Activated CD4-positive, alpha-beta memory T cell treated with anti-CD3 and anti-CD28 coated beads, Interleukin-2, amount 10 ng/mL, durations not matched to agents 7 days and 5 days (primary cell): ENCODE measurements at regions of chr4 and their contacts with region 1.

Region 1: GRCh38 chr4:37603070-37603468 is 83.1 kb downstream of the RELL1 start:
- DNase-seq: peak; percentile 78
- H3K4me3 Mint-ChIP-seq: no peak overlapping the region
- H3K27ac Mint-ChIP-seq: no peak overlapping the region
- H3K4me1 Mint-ChIP-seq: peaks cover 54% of the 10 kb centered on the region
- H3K27me3 Mint-ChIP-seq: no peaks in the 10 kb centered on the region

Region 2: GRCh38 chr4:37586161-37586560 is 16.9 kb before region 1 on chr4:
- CTCF ChIA-PET with region 1: no interaction called
- POLR2A ChIA-PET with region 1: no interaction called
- DNase-seq: no peak
- H3K4me3 Mint-ChIP-seq: no peak overlapping the region
- H3K27ac Mint-ChIP-seq: no peak overlapping the region
- H3K4me1 Mint-ChIP-seq: peaks cover 9% of the 10 kb centered on the region
- H3K27me3 Mint-ChIP-seq: peaks cover 12% of the 10 kb centered on the region

Region 3: DNA sequence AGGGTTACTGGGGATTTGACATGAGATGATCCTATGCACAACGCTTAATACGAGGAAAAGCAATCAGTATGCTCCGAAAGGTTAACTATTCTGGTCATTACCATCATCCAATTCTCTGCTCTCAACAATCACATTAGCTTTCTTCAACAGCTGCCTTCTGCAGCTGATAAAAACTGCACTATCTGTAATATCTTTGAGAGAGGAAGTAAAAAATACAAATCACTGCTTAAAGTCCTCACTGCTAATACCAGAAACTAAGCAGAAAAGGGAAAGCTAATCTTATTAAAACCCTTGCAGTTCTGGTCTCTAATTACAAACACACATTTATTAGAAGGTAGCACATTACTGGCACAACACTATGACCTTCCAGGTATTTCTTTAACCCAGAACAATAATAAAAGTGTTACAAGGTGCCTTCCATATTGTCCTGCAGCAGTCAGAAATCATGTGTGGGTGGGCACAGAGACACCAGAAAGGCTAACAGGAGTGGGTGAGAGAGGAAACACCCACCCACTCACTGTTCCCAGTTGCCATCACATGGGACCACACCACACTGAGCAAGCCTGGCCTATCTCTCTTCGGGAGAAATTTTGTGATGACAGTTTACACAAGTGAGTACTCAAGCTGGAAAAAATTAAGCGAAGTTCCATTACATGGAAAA is 12.1 kb after region 1 on chr4:
- CTCF ChIA-PET with region 1: interaction called, 39 read pairs
- POLR2A ChIA-PET with region 1: interaction called, 3 read pairs
- DNase-seq: no peak
- H3K4me3 Mint-ChIP-seq: no peak overlapping the region
- H3K27ac Mint-ChIP-seq: no peak overlapping the region
- H3K4me1 Mint-ChIP-seq: no peaks in the 10 kb centered on the region
- H3K27me3 Mint-ChIP-seq: no peaks in the 10 kb centered on the region

Region 4: GRCh38 chr4:37639551-37640285 is 36.6 kb after region 1 on chr4:
- CTCF ChIA-PET with region 1: no interaction called
- POLR2A ChIA-PET with region 1: no interaction called
- DNase-seq: no peak
- H3K4me3 Mint-ChIP-seq: no peak overlapping the region
- H3K27ac Mint-ChIP-seq: no peak overlapping the region
- H3K4me1 Mint-ChIP-seq: peaks cover 1% of the 10 kb centered on the region
- H3K27me3 Mint-ChIP-seq: no peaks in the 10 kb centered on the region

Region 5: GRCh38 chr4:37686373-37687193 is 83.5 kb after region 1 on chr4 and contains the start of gene RELL1:
- CTCF ChIA-PET with region 1: interaction called, 26 read pairs
- POLR2A ChIA-PET with region 1: interaction called, 4 read pairs
- DNase-seq: peak; percentile 100
- H3K4me3 Mint-ChIP-seq: peak within 1 kb of the TSS; percentile 95
- H3K27ac Mint-ChIP-seq: peak within 1 kb of the TSS; percentile 96
- H3K4me1 Mint-ChIP-seq: peaks cover 37% of the 10 kb centered on the region
- H3K27me3 Mint-ChIP-seq: peaks cover 4% of the 10 kb centered on the region
- total RNA-seq, gene RELL1: 40.9 to 44.9 TPM